B cell (primary cell): ENCODE measurements at regions of chr16 and their contacts with region 1.

Region 1: DNA sequence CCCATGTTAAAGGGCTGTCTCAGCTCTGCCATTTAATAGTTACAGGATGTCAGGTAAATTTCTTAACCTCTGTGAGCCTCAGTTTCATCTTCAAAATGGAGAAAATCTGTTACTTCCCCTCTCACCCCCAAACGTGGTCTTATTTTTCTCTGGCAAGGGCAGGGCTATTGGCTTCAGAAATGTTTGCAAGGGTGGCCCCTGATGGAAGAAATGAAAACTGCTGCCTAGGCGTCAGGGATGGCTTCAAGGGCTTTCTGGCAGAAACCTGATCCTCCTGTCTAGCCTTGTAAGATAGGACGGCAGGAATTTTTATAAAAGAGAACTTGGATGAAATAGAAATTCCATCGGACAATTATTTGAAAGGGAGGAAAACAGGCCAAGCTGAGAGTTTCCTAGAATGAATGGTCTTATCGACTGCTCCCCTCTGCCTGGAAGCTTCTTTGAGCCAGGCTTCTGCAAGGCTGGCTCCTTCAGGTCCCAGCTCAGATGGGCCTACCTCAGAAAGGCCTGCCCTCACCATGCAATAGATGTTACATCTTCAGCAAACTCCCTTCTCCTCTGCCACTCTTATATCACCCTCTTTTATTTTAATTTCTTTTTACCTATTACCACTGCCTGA is 43.0 kb upstream of the TANGO6 start:
- DNase-seq: peak; percentile 53
- ATAC-seq: peak; percentile 88
- H3K4me3 ChIP-seq: no peak overlapping the region
- H3K4me3 Mint-ChIP-seq: no peak overlapping the region
- H3K27ac ChIP-seq: no peak overlapping the region
- H3K27ac Mint-ChIP-seq: no peak overlapping the region
- H3K4me1 ChIP-seq: no peaks in the 10 kb centered on the region
- H3K4me1 Mint-ChIP-seq: peaks cover 3% of the 10 kb centered on the region
- H3K27me3 ChIP-seq: no peaks in the 10 kb centered on the region
- H3K27me3 Mint-ChIP-seq: no peaks in the 10 kb centered on the region
- CTCF ChIP-seq: peak; percentile 62

Region 2: GRCh38 chr16:68406451-68407152 is 393.8 kb before region 1 on chr16:
- CTCF ChIA-PET with region 1: no interaction called
- POLR2A ChIA-PET with region 1: no interaction called
- intact Hi-C with region 1: no loop called
- DNase-seq: no peak
- ATAC-seq: no peak
- H3K4me3 ChIP-seq: no peak overlapping the region
- H3K4me3 Mint-ChIP-seq: no peak overlapping the region
- H3K27ac ChIP-seq: no peak overlapping the region
- H3K27ac Mint-ChIP-seq: no peak overlapping the region
- H3K4me1 ChIP-seq: peaks cover 0 to 6% of the 10 kb centered on the region in 2 donors
- H3K4me1 Mint-ChIP-seq: peaks cover 5% of the 10 kb centered on the region
- H3K27me3 ChIP-seq: peaks cover 0 to 3% (median 0%) of the 10 kb centered on the region in 4 experiments
- H3K27me3 Mint-ChIP-seq: peaks cover 4% of the 10 kb centered on the region
- CTCF ChIP-seq: no peak

Region 3: DNA sequence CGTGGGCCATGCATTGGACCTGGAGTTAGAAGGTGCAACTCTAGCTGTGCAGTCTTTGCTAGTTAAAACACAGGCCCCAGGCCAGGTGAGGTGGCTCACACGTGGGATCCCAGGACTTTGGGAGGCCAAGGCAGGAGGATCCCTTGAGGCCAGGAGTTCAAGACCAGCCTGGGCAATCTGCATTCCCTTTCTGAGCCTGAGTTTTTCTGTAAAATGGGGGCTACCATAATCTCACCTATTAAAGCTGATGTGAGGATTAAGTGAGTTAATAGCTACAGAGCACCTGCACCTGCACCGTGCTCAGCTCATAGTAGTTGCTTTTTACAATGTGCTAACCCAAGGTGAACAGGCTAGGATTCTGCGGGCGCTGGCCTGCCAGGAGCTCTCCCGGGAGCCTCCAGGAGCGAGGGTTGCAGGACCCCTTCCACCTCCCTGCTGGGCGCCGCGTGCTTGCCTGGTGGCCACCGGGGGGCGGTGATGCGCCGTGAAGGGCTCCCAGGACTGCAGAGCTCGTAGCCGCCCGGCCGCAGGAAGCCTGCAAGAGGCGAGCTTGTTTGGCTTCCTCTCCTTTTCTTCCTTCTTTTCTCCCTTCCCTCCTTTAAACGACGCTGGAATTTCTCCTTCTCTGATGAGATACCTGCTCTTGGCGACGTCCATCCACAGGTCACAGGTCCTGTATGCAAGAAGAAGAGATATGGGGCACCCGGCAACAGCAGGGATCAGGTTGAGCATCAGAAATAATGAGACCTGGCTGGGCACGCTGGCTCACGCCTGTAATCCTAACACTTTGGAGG is 210.0 kb before region 1 on chr16:
- CTCF ChIA-PET with region 1: interaction called, 10 read pairs
- POLR2A ChIA-PET with region 1: no interaction called
- intact Hi-C with region 1: loop called (anchors 2 kb)
- DNase-seq: peak; percentile 33
- ATAC-seq: no peak
- H3K4me3 ChIP-seq: no peak overlapping the region
- H3K4me3 Mint-ChIP-seq: no peak overlapping the region
- H3K27ac ChIP-seq: no peak overlapping the region
- H3K27ac Mint-ChIP-seq: no peak overlapping the region
- H3K4me1 ChIP-seq: no peaks in the 10 kb centered on the region
- H3K4me1 Mint-ChIP-seq: peaks cover 2% of the 10 kb centered on the region
- H3K27me3 ChIP-seq: no peaks in the 10 kb centered on the region
- H3K27me3 Mint-ChIP-seq: peaks cover 13% of the 10 kb centered on the region
- CTCF ChIP-seq: peak; percentile 37

Region 4: DNA sequence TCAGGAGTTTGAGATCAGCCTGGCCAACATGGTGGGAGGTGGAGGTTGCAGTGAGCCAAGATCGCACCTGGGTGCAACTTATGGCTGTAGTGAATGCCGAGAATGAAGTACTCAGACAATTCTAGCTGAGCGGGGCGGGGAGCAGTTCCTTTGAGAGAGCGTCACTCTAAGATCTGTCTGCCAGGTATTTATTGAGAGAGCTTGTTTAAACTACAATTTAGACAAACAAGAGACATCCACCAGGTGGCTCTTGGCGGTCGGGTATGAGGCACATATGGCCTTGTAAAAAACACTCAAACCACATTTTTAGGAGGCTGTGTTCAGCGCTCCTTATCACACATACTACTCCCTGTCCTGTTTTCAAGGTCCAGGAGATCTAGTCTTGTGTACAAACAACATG is 103.9 kb before region 1 on chr16:
- CTCF ChIA-PET with region 1: interaction called, 4 read pairs
- POLR2A ChIA-PET with region 1: no interaction called
- intact Hi-C with region 1: loop called (anchors 2 kb)
- DNase-seq: no peak
- ATAC-seq: no peak
- H3K4me3 ChIP-seq: no peak overlapping the region
- H3K4me3 Mint-ChIP-seq: no peak overlapping the region
- H3K27ac ChIP-seq: no peak overlapping the region
- H3K27ac Mint-ChIP-seq: no peak overlapping the region
- H3K4me1 ChIP-seq: no peaks in the 10 kb centered on the region
- H3K4me1 Mint-ChIP-seq: no peaks in the 10 kb centered on the region
- H3K27me3 ChIP-seq: no peaks in the 10 kb centered on the region
- H3K27me3 Mint-ChIP-seq: peaks cover 10% of the 10 kb centered on the region
- CTCF ChIP-seq: no peak

Region 5: DNA sequence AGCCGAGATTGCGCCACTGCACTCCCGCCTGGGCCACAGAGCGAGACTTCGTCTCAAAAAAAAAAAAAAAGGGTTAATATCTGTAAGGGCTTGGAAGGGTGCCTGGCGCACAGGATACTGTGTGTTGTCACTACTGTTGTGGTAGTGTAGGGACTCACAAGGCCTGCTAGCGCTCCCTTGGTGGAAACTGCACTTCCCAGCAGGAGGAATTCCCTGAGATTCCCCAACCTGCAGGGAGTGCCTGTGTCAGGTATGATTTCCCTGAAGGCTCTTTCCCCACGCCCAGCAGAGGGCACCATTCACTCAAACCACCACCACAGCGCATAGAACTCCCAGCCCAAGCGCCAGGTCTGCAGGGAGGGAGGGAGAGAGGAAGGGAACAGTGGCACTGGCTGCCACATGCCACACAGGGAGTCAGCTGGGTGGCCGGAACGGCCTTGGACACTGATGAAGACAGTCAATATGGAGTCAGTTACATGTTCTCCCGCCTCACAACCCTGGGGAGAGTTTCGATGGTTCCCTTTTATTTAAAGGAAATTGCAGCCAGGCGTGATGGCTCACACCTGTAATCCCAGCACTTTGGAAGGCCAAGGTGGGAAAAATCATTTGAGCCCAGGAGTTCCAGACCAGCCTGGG is 96.0 kb before region 1 on chr16:
- CTCF ChIA-PET with region 1: interaction called, 26 read pairs
- POLR2A ChIA-PET with region 1: no interaction called
- intact Hi-C with region 1: no loop called
- DNase-seq: peak; percentile 55
- ATAC-seq: peak; percentile 60
- H3K4me3 ChIP-seq: no peak overlapping the region
- H3K4me3 Mint-ChIP-seq: no peak overlapping the region
- H3K27ac ChIP-seq: no peak overlapping the region
- H3K27ac Mint-ChIP-seq: peak overlapping the region; percentile 6
- H3K4me1 ChIP-seq: no peaks in the 10 kb centered on the region
- H3K4me1 Mint-ChIP-seq: peaks cover 3% of the 10 kb centered on the region
- H3K27me3 ChIP-seq: no peaks in the 10 kb centered on the region
- H3K27me3 Mint-ChIP-seq: peaks cover 12% of the 10 kb centered on the region
- CTCF ChIP-seq: peak; percentile 64

Region 6: DNA sequence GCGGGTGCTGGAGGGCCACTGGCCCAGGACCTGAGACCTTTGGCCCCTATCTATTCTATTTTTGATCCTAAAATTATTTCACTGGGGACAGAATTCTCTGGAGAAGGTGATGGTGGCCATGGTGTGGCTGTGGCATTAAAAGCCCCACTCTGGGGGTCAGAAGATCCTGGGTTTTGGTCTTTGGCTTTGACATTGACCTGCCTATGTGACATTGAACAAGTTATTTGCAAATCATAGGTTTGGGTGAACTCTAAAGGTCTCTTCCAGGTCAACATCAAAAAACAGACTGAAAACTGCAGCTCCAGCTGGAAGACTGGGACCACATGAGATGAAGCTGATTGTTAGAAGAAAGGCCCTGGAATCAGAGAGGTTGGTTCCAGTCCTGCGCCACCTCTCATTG is 65.6 kb before region 1 on chr16:
- CTCF ChIA-PET with region 1: no interaction called
- POLR2A ChIA-PET with region 1: no interaction called
- intact Hi-C with region 1: no loop called
- DNase-seq: no peak
- ATAC-seq: no peak
- H3K4me3 ChIP-seq: no peak overlapping the region
- H3K4me3 Mint-ChIP-seq: no peak overlapping the region
- H3K27ac ChIP-seq: no peak overlapping the region
- H3K27ac Mint-ChIP-seq: no peak overlapping the region
- H3K4me1 ChIP-seq: peaks cover 15% of the 10 kb centered on the region in 2 donors
- H3K4me1 Mint-ChIP-seq: peaks cover 10% of the 10 kb centered on the region
- H3K27me3 ChIP-seq: peaks cover 0 to 32% (median 13%) of the 10 kb centered on the region in 4 experiments
- H3K27me3 Mint-ChIP-seq: peaks cover 35% of the 10 kb centered on the region
- CTCF ChIP-seq: no peak

Region 7: DNA sequence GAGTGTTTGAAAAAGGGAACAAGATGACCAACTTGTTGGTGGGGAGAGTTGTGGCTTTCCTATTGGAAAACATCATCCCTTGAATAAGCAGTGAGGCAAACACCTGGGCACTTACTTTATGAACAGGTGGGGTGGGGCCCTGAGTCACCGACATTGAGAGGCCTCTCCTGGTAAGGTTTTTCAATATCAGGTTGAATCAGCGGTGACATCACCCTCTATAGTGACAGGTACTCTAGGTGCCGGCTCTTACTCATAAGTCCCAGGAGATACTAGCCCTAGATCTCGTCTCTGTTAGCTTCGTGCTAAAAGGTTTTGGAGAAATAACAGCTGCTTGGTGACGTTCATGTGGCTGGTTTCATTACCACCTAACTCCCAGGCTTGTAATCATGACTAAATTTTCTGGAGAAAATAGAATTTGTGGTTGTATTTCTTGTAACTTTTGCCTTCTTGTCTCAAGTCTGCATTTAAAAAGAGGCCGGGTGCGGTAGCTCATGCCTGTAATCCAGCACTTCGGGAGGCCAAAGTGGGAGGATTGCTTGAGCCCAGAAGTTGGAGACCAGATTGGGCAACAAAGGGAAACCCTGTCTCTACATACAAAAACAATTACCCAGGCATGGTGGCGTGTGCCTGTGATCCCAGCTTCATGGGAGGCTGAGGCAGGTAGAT is 44.0 kb before region 1 on chr16:
- CTCF ChIA-PET with region 1: interaction called, 13 read pairs
- POLR2A ChIA-PET with region 1: no interaction called
- intact Hi-C with region 1: no loop called
- DNase-seq: peak; percentile 43
- ATAC-seq: peak; percentile 80
- H3K4me3 ChIP-seq: no peak overlapping the region
- H3K4me3 Mint-ChIP-seq: peak overlapping the region; percentile 69
- H3K27ac ChIP-seq: peak overlapping the region; percentile 50 to 69
- H3K27ac Mint-ChIP-seq: peak overlapping the region; percentile 99
- H3K4me1 ChIP-seq: peaks cover 5 to 22% of the 10 kb centered on the region in 2 donors
- H3K4me1 Mint-ChIP-seq: peaks cover 37% of the 10 kb centered on the region
- H3K27me3 ChIP-seq: peaks cover 0 to 4% (median 1%) of the 10 kb centered on the region in 4 experiments
- H3K27me3 Mint-ChIP-seq: peaks cover 2% of the 10 kb centered on the region
- CTCF ChIP-seq: no peak

Region 8: GRCh38 chr16:68764862-68765261 is 35.5 kb before region 1 on chr16:
- CTCF ChIA-PET with region 1: no interaction called
- POLR2A ChIA-PET with region 1: interaction called, 3 read pairs
- intact Hi-C with region 1: loop called (anchors 5 kb)
- DNase-seq: no peak
- ATAC-seq: no peak
- H3K4me3 ChIP-seq: no peak overlapping the region
- H3K4me3 Mint-ChIP-seq: no peak overlapping the region
- H3K27ac ChIP-seq: no peak overlapping the region
- H3K27ac Mint-ChIP-seq: no peak overlapping the region
- H3K4me1 ChIP-seq: no peaks in the 10 kb centered on the region
- H3K4me1 Mint-ChIP-seq: peaks cover 9% of the 10 kb centered on the region
- H3K27me3 ChIP-seq: no peaks in the 10 kb centered on the region
- H3K27me3 Mint-ChIP-seq: peaks cover 11% of the 10 kb centered on the region
- CTCF ChIP-seq: no peak

Region 9: DNA sequence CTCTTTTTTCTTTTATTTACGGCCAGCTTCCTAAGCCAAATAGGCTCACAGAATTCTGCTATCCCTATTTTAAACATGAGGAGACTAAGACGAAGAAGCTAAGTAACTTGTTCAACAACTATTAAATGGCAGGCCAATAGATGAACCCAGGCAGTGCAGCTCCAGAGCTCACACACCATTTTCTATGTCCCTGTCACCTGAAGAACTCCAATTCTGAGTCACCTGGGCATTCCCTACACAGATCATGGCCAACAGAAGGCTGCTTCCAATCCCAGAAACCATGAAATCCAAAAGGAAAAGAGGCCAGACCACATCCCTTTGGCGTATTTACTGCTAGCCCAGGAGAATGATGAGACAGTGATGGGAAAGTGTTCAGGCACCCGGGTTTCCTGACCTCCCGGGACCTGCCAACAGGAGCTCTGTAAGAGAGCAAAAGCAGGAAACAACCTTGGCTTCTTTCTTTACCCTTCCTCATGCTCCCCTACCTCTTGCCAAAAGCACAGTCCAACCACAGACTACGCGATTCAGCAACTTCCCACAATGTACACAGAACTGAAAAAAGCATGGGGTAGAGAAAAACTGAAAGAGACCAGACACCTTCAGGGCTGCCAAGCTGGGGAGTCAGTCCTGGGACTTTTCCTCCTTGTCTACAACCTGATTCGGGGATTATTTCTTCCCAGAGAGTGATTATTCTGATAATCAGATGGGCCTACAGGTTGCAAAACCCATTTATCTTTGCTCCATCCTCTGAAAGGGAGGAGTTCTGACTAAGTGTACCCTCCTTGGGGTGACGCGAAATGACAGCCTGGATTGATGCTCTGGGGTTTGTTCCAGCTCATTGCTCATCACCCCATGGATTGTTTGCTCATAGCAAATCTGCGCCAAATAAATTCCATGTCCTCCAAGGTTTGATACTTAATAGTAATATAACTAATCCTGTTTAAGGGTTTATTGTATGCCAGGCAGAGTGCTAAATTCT is 257.3 kb after region 1 on chr16:
- CTCF ChIA-PET with region 1: no interaction called
- POLR2A ChIA-PET with region 1: no interaction called
- intact Hi-C with region 1: no loop called
- DNase-seq: no peak
- ATAC-seq: no peak
- H3K4me3 ChIP-seq: no peak overlapping the region
- H3K4me3 Mint-ChIP-seq: no peak overlapping the region
- H3K27ac ChIP-seq: no peak overlapping the region
- H3K27ac Mint-ChIP-seq: no peak overlapping the region
- H3K4me1 ChIP-seq: no peaks in the 10 kb centered on the region
- H3K4me1 Mint-ChIP-seq: no peaks in the 10 kb centered on the region
- H3K27me3 ChIP-seq: no peaks in the 10 kb centered on the region
- H3K27me3 Mint-ChIP-seq: no peaks in the 10 kb centered on the region
- CTCF ChIP-seq: no peak